Mammary epithelial cell (primary cell): ENCODE measurements at regions of chr11 and their contacts with region 1.

Region 1: DNA sequence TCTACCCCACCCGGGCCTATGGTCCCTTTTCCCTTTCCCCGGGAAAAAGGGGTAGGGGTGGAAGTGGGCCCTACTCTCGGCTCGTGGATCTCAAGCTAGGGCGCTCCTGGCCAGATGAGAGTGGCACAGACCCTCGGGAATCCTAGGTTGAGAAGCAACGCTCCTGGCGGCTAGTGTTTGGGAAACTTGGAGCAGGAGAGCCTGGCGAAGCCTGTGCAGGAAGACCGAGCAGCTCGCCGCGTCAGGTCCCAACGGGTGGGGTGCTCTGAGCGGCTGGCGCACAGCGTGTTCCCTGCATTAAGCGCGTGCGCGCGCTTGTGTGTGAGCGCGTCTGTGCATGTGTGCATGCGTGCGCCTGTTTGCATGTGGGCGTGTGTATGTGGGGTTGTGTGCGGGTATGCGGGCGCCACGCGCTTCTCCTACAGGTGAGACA is 7.1 kb upstream of the FLI1 start:
- DNase-seq: peak; percentile 39
- H3K4me3 ChIP-seq: peak overlapping the region in 2 of 3 experiments; percentile 24 to 40
- H3K27ac ChIP-seq: no peak overlapping the region
- H3K4me1 ChIP-seq: peaks cover 7% of the 10 kb centered on the region
- H3K27me3 ChIP-seq: peaks cover 43% of the 10 kb centered on the region
- CTCF ChIP-seq: no peak

Region 2: DNA sequence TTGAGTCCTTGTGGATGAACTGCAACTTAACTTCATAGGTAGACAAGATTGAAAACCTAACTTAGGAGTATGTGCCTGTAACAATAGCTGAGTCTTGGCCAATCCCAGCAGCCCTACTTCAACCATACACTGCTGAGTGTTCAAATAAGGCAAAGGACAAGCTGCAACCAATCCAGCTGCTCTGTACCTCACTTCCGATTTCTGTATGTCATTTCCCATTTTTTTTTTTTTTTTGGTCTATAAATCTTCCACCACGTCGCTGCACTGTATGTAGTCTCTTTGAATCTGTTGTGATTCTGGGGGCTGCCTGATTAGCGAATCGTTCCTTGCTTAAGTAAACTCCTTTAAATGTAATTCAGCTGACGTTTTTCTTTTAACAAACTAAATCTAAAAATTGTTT is 28.3 kb before region 1 on chr11:
- CTCF ChIA-PET with region 1: no interaction called
- dilution Hi-C with region 1: no loop called
- in situ Hi-C with region 1: no loop called
- intact Hi-C with region 1: no loop called
- DNase-seq: no peak
- H3K4me3 ChIP-seq: no peak overlapping the region
- H3K27ac ChIP-seq: no peak overlapping the region
- H3K4me1 ChIP-seq: no peaks in the 10 kb centered on the region
- H3K27me3 ChIP-seq: peaks cover 2% of the 10 kb centered on the region
- CTCF ChIP-seq: no peak

Region 3: GRCh38 chr11:128725630-128726319 is 39.0 kb after region 1 on chr11:
- CTCF ChIA-PET with region 1: no interaction called
- dilution Hi-C with region 1: loop called (anchors 5 kb)
- in situ Hi-C with region 1: no loop called
- intact Hi-C with region 1: no loop called
- DNase-seq: peak; percentile 68
- H3K4me3 ChIP-seq: no peak overlapping the region
- H3K27ac ChIP-seq: no peak overlapping the region
- H3K4me1 ChIP-seq: no peaks in the 10 kb centered on the region
- H3K27me3 ChIP-seq: no peaks in the 10 kb centered on the region
- CTCF ChIP-seq: no peak

Region 4: DNA sequence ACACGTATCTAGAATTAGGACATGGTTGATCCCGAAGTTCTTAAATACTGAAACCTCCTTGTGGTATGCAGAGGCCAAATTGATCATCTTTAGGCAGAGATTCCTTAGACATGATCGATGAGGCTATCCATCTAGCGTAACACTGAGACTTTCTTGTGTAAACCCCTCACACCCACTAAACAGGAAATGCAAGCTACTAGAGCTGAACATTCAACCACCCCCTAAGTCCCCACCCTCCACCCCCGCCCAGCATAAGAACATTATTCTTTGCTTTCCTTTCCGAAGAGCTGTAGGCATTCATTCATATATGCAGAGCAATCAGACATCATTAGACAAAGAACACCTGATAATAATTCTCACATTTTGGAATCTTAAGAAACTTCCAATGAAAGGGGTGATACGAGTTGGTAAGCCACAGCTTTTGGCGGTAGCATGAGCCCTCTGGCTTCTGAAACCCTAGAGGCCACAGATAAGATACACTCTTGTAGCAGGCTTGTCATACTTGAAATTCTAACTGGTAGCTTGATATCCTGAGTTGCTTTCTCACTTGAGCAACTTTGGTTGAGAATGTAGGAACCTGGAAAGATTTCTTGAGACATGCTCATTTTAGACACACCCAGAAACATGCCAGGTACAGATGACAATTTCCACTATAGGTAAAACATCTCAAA is 49.3 kb after region 1 on chr11:
- CTCF ChIA-PET with region 1: no interaction called
- dilution Hi-C with region 1: no loop called
- in situ Hi-C with region 1: no loop called
- intact Hi-C with region 1: no loop called
- DNase-seq: no peak
- H3K4me3 ChIP-seq: no peak overlapping the region
- H3K27ac ChIP-seq: no peak overlapping the region
- H3K4me1 ChIP-seq: no peaks in the 10 kb centered on the region
- H3K27me3 ChIP-seq: no peaks in the 10 kb centered on the region
- CTCF ChIP-seq: no peak

Region 5: GRCh38 chr11:128790196-128790595 is 103.4 kb after region 1 on chr11:
- CTCF ChIA-PET with region 1: no interaction called
- dilution Hi-C with region 1: loop called (anchors 5 kb)
- in situ Hi-C with region 1: no loop called
- intact Hi-C with region 1: no loop called
- DNase-seq: peak; percentile 81
- H3K4me3 ChIP-seq: no peak overlapping the region
- H3K27ac ChIP-seq: no peak overlapping the region
- H3K4me1 ChIP-seq: peaks cover 12% of the 10 kb centered on the region
- H3K27me3 ChIP-seq: no peaks in the 10 kb centered on the region
- CTCF ChIP-seq: no peak

Region 6: DNA sequence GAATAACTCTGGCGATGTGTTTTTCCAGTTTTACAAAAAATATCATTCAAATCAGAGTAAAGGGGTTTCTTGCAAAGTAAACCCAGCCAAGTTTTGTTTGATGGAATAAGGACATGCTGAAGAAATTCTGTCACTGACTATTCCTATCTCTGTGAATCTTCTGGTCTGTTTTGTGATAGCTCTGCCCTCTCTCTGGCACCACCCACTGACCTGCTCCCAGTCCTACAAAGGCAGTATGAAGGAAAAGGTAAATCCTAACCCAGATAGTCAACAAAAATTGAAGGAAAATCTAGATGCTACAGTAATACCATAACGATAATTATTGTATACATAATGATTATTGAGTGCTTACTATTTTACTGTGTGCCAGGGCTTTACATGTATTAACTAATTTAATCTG is 332.2 kb after region 1 on chr11:
- CTCF ChIA-PET with region 1: no interaction called
- dilution Hi-C with region 1: no loop called
- in situ Hi-C with region 1: no loop called
- intact Hi-C with region 1: no loop called
- DNase-seq: no peak
- H3K4me3 ChIP-seq: no peak overlapping the region
- H3K27ac ChIP-seq: no peak overlapping the region
- H3K4me1 ChIP-seq: peaks cover 17% of the 10 kb centered on the region
- H3K27me3 ChIP-seq: no peaks in the 10 kb centered on the region
- CTCF ChIP-seq: peak in 1 of 2 donors; percentile 27